Sigmoid colon (tissue), 7 donors: ENCODE measurements at regions of chr19 and their contacts with region 1.

Region 1: GRCh38 chr19:54102421-54103169 is at the start of gene NDUFA3:
- DNase-seq: peak; percentile 99
- H3K4me3 ChIP-seq: peak within 1 kb of the TSS; percentile 79 to 97 (median 94)
- H3K27ac ChIP-seq: peak within 1 kb of the TSS; percentile 79 to 86 (median 84)
- H3K4me1 ChIP-seq: peaks cover 0 to 18% (median 16%) of the 10 kb centered on the region in 4 donors
- H3K27me3 ChIP-seq: no peaks in the 10 kb centered on the region
- CTCF ChIP-seq: no peak
- EP300 ChIP-seq: no peak
- POLR2A ChIP-seq: peak; percentile 45 to 73
- total RNA-seq, gene NDUFA3: 18.8 to 32.4 (median 20.2) TPM

Region 2: GRCh38 chr19:53844849-53845246 is 257.7 kb before region 1 on chr19:
- intact Hi-C with region 1: loop called (anchors 5 kb)
- DNase-seq: no peak
- H3K4me3 ChIP-seq: no peak overlapping the region
- H3K27ac ChIP-seq: no peak overlapping the region
- H3K4me1 ChIP-seq: peaks cover 0 to 8% (median 3%) of the 10 kb centered on the region in 4 donors
- H3K27me3 ChIP-seq: peaks cover 0 to 17% (median 0%) of the 10 kb centered on the region in 3 donors
- CTCF ChIP-seq: no peak
- EP300 ChIP-seq: no peak
- POLR2A ChIP-seq: no peak

Region 3: GRCh38 chr19:53977429-53977990 is 125.1 kb before region 1 on chr19:
- intact Hi-C with region 1: loop called (anchors 5 kb)
- DNase-seq: peak; percentile 87
- H3K4me3 ChIP-seq: peak overlapping the region in 3 of 4 donors; percentile 13 to 38 (median 21)
- H3K27ac ChIP-seq: no peak overlapping the region
- H3K4me1 ChIP-seq: peaks cover 0 to 31% (median 24%) of the 10 kb centered on the region in 4 donors
- H3K27me3 ChIP-seq: peaks cover 36 to 77% (median 62%) of the 10 kb centered on the region in 3 donors
- CTCF ChIP-seq: no peak
- EP300 ChIP-seq: no peak
- POLR2A ChIP-seq: no peak

Region 4: GRCh38 chr19:54115109-54116063 is 12.8 kb after region 1 on chr19 and contains the starts of genes PRPF31 and TFPT:
- intact Hi-C with region 1: loop called (anchors 1 kb)
- DNase-seq: peak; percentile 99
- H3K4me3 ChIP-seq: peak within 1 kb of the TSS; percentile 67 to 89 (median 72)
- H3K27ac ChIP-seq: peak within 1 kb of the TSS; percentile 87 to 89 (median 88)
- H3K4me1 ChIP-seq: peaks cover 2 to 29% (median 25%) of the 10 kb centered on the region in 4 donors
- H3K27me3 ChIP-seq: no peaks in the 10 kb centered on the region
- CTCF ChIP-seq: no peak
- EP300 ChIP-seq: peak in 1 of 4 donors; percentile 15
- POLR2A ChIP-seq: peak; percentile 73 to 77
- total RNA-seq, gene PRPF31: 48.7 to 53.5 (median 51.5) TPM
- total RNA-seq, gene TFPT: 18.2 to 24.7 (median 20.4) TPM

Region 5: GRCh38 chr19:54297760-54298305 is 195.2 kb after region 1 on chr19:
- intact Hi-C with region 1: no loop called
- DNase-seq: peak; percentile 25
- H3K4me3 ChIP-seq: no peak overlapping the region
- H3K27ac ChIP-seq: no peak overlapping the region
- H3K4me1 ChIP-seq: no peaks in the 10 kb centered on the region
- H3K27me3 ChIP-seq: peaks cover 0 to 3% (median 0%) of the 10 kb centered on the region in 3 donors
- CTCF ChIP-seq: no peak
- EP300 ChIP-seq: no peak
- POLR2A ChIP-seq: no peak